IMR-90 (cell line): ENCODE measurements at regions of chr6 and their contacts with region 1.

Region 1: DNA sequence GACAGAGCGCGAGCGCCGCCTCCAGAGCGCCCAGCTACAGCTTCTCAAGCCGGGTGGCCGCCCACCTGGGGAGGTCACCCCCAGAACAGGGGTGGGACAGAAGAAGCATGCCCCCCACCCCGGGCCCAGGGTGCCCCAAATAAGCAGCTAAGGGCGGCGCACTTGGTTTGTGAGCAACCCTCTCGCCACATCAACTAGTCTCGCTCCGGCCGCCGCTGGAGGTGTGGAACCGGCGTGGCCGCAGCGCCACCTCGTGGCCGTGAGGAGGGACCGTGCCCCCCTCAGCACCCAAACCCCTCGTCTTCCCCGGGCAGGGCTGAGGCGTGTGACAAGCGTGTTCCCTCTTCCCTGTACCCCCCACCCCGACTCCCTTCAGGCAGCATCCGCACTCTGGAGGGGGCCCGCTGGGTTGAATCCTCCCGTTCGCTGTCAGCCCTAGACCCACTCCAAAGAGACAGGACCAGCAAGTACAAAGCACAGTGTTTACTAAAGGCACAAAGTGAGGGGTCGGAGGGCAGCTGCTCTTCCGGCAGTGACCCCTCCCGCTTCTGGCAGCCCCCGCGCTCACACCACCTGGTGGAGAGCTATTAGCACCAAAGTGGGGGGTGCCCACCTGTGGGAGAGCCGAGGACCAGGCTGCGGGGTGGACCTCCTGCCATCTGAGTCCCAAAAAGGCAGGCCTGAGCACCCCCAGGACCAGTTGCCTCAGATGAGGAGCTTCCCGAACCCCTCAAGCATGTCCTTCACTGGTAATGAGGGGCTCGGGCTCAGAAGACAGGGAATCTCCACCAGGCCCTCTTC is 45.4 kb downstream of the MDFI start:
- DNase-seq: peak; percentile 51
- ATAC-seq: peak; percentile 87
- H3K4me3 ChIP-seq: no peak overlapping the region
- H3K27ac ChIP-seq: no peak overlapping the region
- H3K4me1 ChIP-seq: no peaks in the 10 kb centered on the region
- H3K27me3 ChIP-seq: peaks cover under 1% of the 10 kb centered on the region; the same call in 1 of the 2 replicates
- CTCF ChIP-seq: peak; percentile 91
- POLR2A ChIP-seq: peak; percentile 36; the same call in 1 of the 2 replicates
- RAD21 ChIP-seq: peak; percentile 91

Region 2: DNA sequence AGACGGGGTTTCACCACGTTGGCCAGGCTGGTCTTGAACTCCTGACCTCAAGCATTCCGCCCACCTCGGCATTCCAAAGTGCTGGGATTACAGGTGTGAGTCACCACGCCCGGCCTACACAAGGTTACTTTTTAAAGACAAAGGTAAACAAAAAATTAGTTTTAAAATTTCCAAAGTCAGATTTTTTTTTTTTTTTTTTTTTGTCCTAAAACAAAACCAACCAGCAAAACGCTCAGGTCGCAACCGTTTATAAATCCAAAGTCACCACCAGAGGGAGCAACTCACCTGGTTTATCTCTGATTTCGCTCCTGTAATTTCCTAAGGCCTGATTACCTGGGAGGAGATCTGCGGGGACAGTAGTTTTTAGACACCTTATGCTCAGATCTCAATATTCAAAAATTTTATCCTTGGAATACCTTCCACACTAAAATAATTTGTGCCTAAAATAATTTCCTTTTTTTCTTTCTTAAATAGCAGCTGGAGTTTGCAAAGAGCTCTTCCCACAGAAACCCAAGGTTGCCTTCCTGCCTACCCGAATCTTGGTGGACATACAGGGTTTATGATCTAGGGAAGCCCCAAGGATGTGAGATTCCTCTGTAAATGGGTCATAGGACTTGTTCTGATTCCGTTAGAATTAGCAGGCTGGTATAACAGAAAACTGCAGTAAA is 377.4 kb before region 1 on chr6:
- CTCF ChIA-PET with region 1: no interaction called
- POLR2A ChIA-PET with region 1: no interaction called
- dilution Hi-C with region 1: no loop called
- in situ Hi-C with region 1: no loop called
- intact Hi-C with region 1: loop called (anchors 2 kb)
- DNase-seq: peak; percentile 49
- ATAC-seq: no peak
- H3K4me3 ChIP-seq: no peak overlapping the region
- H3K27ac ChIP-seq: no peak overlapping the region
- H3K4me1 ChIP-seq: no peaks in the 10 kb centered on the region
- H3K27me3 ChIP-seq: peaks cover 19% of the 10 kb centered on the region
- CTCF ChIP-seq: peak; percentile 59
- POLR2A ChIP-seq: no peak
- RAD21 ChIP-seq: peak; percentile 38; the same call in 1 of the 2 replicates

Region 3: GRCh38 chr6:41424370-41425058 is 259.2 kb before region 1 on chr6:
- CTCF ChIA-PET with region 1: no interaction called
- POLR2A ChIA-PET with region 1: no interaction called
- dilution Hi-C with region 1: no loop called
- in situ Hi-C with region 1: no loop called
- intact Hi-C with region 1: loop called (anchors 1 kb)
- DNase-seq: peak; percentile 71
- ATAC-seq: peak; percentile 91
- H3K4me3 ChIP-seq: no peak overlapping the region
- H3K27ac ChIP-seq: no peak overlapping the region
- H3K4me1 ChIP-seq: 0 out of 2 replicates have a peak, but pooled peaks cover 1% of the 10 kb centered on the region
- H3K27me3 ChIP-seq: peaks cover 68% of the 10 kb centered on the region
- CTCF ChIP-seq: peak; percentile 85
- POLR2A ChIP-seq: no peak
- RAD21 ChIP-seq: peak; percentile 78

Region 4: GRCh38 chr6:41602864-41603608 is 80.7 kb before region 1 on chr6:
- CTCF ChIA-PET with region 1: interaction called, 18 read pairs
- POLR2A ChIA-PET with region 1: interaction called, 7 read pairs
- dilution Hi-C with region 1: no loop called
- in situ Hi-C with region 1: loop called (anchors 5 kb)
- intact Hi-C with region 1: loop called (anchors 1 kb)
- DNase-seq: peak; percentile 82
- ATAC-seq: peak; percentile 93
- H3K4me3 ChIP-seq: no peak overlapping the region
- H3K27ac ChIP-seq: no peak overlapping the region
- H3K4me1 ChIP-seq: no peaks in the 10 kb centered on the region
- H3K27me3 ChIP-seq: no peaks in the 10 kb centered on the region; the same call in 1 of the 2 replicates
- CTCF ChIP-seq: peak; percentile 93
- POLR2A ChIP-seq: no peak
- RAD21 ChIP-seq: peak; percentile 85

Region 5: DNA sequence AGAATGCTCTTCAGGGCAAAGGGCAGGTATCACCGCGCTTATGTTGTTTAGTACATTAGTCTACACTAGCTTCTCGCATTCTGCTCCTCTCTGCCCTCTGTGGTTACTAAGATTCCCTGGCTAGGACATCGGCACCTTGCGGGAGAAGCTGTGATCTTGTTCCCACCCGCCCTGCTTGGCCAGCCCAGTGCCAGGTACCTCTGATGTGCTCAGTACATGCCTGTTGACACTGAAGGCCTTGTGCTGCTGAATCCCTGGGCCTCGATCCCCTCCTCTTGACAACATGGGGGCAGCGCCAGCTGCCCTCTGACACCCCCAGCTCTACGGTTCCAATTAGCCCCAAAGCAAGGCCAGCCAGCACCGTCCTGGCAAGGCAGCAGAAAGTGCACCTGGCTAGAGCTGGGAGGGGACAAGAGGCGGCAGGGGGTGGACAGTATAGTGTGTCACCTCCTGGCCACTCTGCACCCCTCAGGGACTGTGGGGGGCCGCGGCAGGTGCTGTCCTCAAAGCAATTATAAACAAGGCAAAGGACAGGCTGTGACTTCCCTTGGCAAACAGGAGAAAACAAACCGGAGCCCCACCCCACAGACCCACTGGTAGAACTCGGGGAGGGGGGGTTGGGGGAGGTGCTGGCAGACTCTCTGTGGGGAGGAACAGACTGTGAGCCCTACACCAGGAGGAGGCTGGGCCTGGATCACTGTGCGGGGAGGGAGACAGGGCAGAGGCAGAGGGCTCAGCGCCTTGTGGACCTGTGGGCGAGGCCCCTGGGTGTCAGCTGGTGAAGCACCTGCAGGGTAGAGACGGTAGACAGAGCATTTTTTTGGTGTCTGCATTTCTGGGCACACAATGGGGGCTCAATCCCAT is 44.6 kb after region 1 on chr6:
- CTCF ChIA-PET with region 1: no interaction called
- POLR2A ChIA-PET with region 1: no interaction called
- dilution Hi-C with region 1: no loop called
- in situ Hi-C with region 1: no loop called
- intact Hi-C with region 1: no loop called
- DNase-seq: no peak
- ATAC-seq: no peak
- H3K4me3 ChIP-seq: no peak overlapping the region
- H3K27ac ChIP-seq: no peak overlapping the region
- H3K4me1 ChIP-seq: peaks cover 24% of the 10 kb centered on the region
- H3K27me3 ChIP-seq: no peaks in the 10 kb centered on the region
- CTCF ChIP-seq: no peak
- POLR2A ChIP-seq: no peak
- RAD21 ChIP-seq: no peak

Region 6: GRCh38 chr6:41779793-41780545 is 96.3 kb after region 1 on chr6 and contains the start of gene FRS3:
- CTCF ChIA-PET with region 1: no interaction called
- POLR2A ChIA-PET with region 1: no interaction called
- dilution Hi-C with region 1: no loop called
- in situ Hi-C with region 1: no loop called
- intact Hi-C with region 1: loop called (anchors 1 kb)
- DNase-seq: peak; percentile 92
- ATAC-seq: peak; percentile 95
- H3K4me3 ChIP-seq: peak within 1 kb of the TSS; percentile 54
- H3K27ac ChIP-seq: peak within 1 kb of the TSS; percentile 38
- H3K4me1 ChIP-seq: peaks cover 9% of the 10 kb centered on the region
- H3K27me3 ChIP-seq: no peaks in the 10 kb centered on the region
- CTCF ChIP-seq: peak; percentile 97
- POLR2A ChIP-seq: no peak
- RAD21 ChIP-seq: peak; percentile 94
- total RNA-seq, gene FRS3: 0.28 and 0.54 TPM in 2 replicates

Region 7: GRCh38 chr6:41824571-41825569 is 141.2 kb after region 1 on chr6:
- CTCF ChIA-PET with region 1: no interaction called
- POLR2A ChIA-PET with region 1: no interaction called
- dilution Hi-C with region 1: no loop called
- in situ Hi-C with region 1: no loop called
- intact Hi-C with region 1: no loop called
- DNase-seq: peak; percentile 76
- ATAC-seq: peak; percentile 76
- H3K4me3 ChIP-seq: no peak overlapping the region
- H3K27ac ChIP-seq: no peak overlapping the region
- H3K4me1 ChIP-seq: no peaks in the 10 kb centered on the region
- H3K27me3 ChIP-seq: no peaks in the 10 kb centered on the region
- CTCF ChIP-seq: no peak
- POLR2A ChIP-seq: no peak
- RAD21 ChIP-seq: no peak